Activated T-helper 1 cell treated with anti-CD3 and anti-CD28 coated beads, Interleukin-12 subunit alpha, Interleukin-12 subunit beta, Interleukin-2, Interleukin-4 antibody, amounts not matched to agents 30 ng/mL and 10 ng/mL and 1 ng/mL, durations not matched to agents 14 hours and 24 hours and 36 hours (primary cell): ENCODE measurements at regions of chr20 and their contacts with region 1.

Region 1: DNA sequence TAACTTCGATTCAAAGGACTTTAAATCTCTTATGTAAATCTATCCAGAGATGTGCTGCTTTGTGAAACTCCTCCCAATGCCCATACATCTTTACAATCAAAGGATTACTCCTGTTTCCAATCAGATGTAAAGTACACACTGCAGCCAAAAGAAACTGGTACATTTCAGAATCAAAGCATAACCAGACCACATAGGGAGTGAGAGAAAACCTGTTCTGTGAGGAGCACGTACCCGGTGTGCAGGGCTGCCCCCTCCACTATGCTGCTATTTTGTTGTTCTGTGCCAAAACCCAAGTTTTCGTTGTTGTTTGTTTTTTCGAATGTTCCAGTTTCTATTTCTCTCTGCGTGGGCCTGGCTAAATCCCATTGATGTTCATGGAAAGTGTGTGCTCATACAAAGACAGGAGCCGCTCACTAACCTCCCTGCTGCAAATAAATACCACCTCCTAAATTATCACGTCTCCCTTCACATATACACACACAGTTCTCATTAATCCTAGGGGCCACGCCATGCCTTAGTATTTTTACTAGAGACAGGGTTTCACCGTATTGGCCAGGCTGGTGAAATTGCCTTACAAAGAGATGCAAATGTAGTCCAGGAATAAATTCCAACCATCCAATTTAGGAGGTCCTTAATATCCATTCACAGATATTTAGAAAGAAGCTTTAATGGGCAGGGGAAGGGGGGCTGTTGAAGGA is 52.9 kb downstream of the ATP9A start:
- DNase-seq: no peak
- H3K4me3 Mint-ChIP-seq: peak overlapping the region; percentile 50
- H3K27ac Mint-ChIP-seq: peak overlapping the region; percentile 88
- H3K4me1 Mint-ChIP-seq: peaks cover 39% of the 10 kb centered on the region
- H3K27me3 Mint-ChIP-seq: peaks cover 5% of the 10 kb centered on the region

Region 2: GRCh38 chr20:51385646-51386530 is 329.4 kb before region 1 on chr20:
- intact Hi-C with region 1: loop called (anchors 5 kb)
- DNase-seq: no peak
- H3K4me3 Mint-ChIP-seq: peak overlapping the region; percentile 50
- H3K27ac Mint-ChIP-seq: no peak overlapping the region
- H3K4me1 Mint-ChIP-seq: peaks cover 78% of the 10 kb centered on the region
- H3K27me3 Mint-ChIP-seq: no peaks in the 10 kb centered on the region

Region 3: DNA sequence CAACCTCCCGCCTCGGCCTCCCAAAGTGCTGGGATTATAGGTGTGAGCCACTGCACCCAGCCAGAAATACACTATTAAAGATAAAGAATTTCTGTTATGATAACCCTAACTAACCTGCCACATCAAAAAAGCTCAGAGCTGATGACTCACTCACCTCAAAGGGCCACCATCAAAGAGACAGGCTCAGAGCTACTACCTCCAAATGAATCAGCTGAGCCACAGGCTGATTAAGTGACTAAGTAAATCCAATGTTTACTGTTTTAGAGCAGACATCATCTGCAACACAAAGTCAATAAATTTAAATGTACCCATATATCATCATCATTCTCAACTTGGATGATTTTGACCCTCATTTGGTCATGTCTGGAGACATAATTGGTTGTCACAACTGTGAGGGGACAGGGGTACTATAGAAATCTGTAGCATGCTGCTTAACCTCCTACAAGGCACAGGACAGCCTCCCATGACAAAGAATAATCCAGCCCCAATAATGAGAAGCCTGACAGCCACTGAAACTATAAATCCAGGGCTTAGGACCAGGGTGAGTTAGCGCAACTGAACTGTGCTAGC is 53.6 kb before region 1 on chr20:
- intact Hi-C with region 1: loop called (anchors 1 kb)
- DNase-seq: peak; percentile 20
- H3K4me3 Mint-ChIP-seq: peak overlapping the region; percentile 5
- H3K27ac Mint-ChIP-seq: peak overlapping the region; percentile 58
- H3K4me1 Mint-ChIP-seq: peaks cover 24% of the 10 kb centered on the region
- H3K27me3 Mint-ChIP-seq: no peaks in the 10 kb centered on the region

Region 4: GRCh38 chr20:51732096-51732791 is 16.9 kb after region 1 on chr20:
- intact Hi-C with region 1: loop called (anchors 1 kb)
- DNase-seq: no peak
- H3K4me3 Mint-ChIP-seq: peak overlapping the region; percentile 85
- H3K27ac Mint-ChIP-seq: peak overlapping the region; percentile 91
- H3K4me1 Mint-ChIP-seq: peaks cover 8% of the 10 kb centered on the region
- H3K27me3 Mint-ChIP-seq: no peaks in the 10 kb centered on the region

Region 5: DNA sequence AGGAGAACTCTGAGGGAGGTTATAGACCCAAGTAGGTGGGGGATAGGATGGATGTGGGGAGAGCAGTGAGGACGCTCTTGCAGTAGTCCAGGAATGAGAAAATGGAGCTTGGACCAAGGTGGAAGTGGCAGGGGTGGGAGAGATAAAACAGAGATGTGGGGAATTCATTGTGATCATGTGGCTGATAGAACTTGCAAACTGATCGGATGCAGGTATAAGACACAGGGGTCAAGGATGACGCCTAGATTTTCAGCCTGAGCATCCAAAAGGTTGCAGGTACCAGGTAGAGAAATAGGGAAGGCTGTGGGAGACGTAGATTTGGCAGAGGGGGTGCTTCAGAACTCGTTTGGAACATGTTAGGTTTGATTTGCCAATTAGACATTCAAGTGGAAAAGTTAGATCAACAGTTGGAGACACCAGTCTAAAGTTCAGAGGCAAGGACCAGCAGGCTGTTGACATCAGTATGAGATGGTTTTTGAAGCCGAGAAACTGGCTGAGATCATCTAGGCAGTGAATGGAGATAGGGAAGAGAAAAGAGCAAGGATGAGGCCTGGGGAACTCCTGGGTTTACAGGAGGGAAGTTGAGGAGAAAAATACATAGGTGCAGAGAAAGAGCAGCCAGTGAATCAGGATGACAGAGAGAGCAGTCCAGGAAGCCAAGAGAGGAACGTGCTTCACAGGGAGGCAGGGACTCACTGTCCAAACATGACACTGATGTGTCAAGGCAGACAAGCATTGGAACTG is 99.9 kb after region 1 on chr20:
- intact Hi-C with region 1: no loop called
- DNase-seq: no peak
- H3K4me3 Mint-ChIP-seq: no peak overlapping the region
- H3K27ac Mint-ChIP-seq: no peak overlapping the region
- H3K4me1 Mint-ChIP-seq: no peaks in the 10 kb centered on the region
- H3K27me3 Mint-ChIP-seq: peaks cover 2% of the 10 kb centered on the region

Region 6: DNA sequence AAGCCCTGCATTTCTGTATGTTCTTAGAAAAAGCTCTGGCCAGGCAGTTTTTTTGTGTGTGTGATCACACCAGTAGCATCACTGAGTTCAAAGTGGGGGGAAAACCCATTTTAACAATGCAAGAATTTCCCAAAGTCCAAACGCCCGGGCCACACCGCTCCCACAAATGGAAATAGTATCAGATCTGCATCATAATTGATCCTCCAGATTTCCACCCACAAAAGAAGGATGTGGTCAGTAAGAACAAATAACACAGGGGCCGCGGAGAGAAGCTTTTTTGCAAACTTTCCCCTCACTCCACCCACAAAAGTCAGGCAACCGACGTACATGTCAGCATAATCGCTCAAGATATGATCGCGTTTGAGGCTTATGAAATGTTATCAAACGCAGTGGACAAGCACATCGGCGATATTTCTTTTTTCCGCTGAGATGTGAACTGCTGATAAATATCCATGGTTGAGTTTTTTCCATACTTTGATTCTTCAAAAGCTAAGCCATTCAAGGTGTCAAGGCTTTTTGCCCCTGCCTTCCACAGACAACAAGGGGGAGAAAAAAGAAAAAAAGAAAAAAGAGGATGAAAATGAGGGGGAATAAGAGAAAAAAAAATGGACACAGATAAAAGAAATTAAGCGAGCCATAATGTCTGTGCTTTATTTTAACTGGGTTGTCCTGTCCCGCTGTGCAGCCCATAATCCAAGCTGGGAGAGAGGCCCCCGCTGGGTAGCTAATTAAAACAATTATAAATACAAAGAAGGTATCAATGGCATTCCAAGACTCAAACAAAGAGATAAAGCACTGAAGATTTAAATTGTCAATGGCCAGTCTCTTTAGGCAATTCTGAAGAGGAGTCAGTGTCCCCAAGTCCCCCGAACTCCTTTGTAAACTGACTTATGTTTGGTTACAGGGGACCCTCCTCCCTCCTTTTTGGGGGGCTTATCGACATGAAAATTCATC is 332.8 kb after region 1 on chr20:
- intact Hi-C with region 1: loop called (anchors 2 kb)
- DNase-seq: peak; percentile 38
- H3K4me3 Mint-ChIP-seq: peak overlapping the region; percentile 48
- H3K27ac Mint-ChIP-seq: peak overlapping the region; percentile 84
- H3K4me1 Mint-ChIP-seq: peaks cover 34% of the 10 kb centered on the region
- H3K27me3 Mint-ChIP-seq: peaks cover 1% of the 10 kb centered on the region